Transverse colon (tissue), 4 donors: ENCODE measurements at regions of chr2 and their contacts with region 1.

Region 1: GRCh38 chr2:70301344-70302194 is at the start of gene FAM136A:
- DNase-seq: peak; percentile 91
- H3K4me3 ChIP-seq: peak within 1 kb of the TSS; percentile 60 to 94 (median 82)
- H3K27ac ChIP-seq: peak within 1 kb of the TSS; percentile 86 to 93 (median 90)
- H3K4me1 ChIP-seq: peaks cover 4 to 13% (median 8%) of the 10 kb centered on the region in 4 donors
- H3K27me3 ChIP-seq: no peaks in the 10 kb centered on the region
- CTCF ChIP-seq: peak; percentile 83 to 99 (median 97)
- EP300 ChIP-seq: no peak
- POLR2A ChIP-seq: peak; percentile 55
- total RNA-seq, gene FAM136A: 10.7 to 45.1 (median 31.0) TPM

Region 2: GRCh38 chr2:69914170-69914960 is 387.2 kb before region 1 on chr2:
- in situ Hi-C with region 1: loop called in 2 of 4 experiments (anchors 10 kb)
- intact Hi-C with region 1: loop called (anchors 5 kb)
- DNase-seq: peak; percentile 100
- H3K4me3 ChIP-seq: peak overlapping the region; percentile 38 to 92 (median 82)
- H3K27ac ChIP-seq: peak overlapping the region; percentile 94 to 99 (median 98)
- H3K4me1 ChIP-seq: peaks cover 13 to 49% (median 21%) of the 10 kb centered on the region in 4 donors
- H3K27me3 ChIP-seq: no peaks in the 10 kb centered on the region
- CTCF ChIP-seq: peak in 3 of 5 experiments; percentile 15 to 46 (median 17)
- EP300 ChIP-seq: no peak
- POLR2A ChIP-seq: peak; percentile 71

Region 3: GRCh38 chr2:70948337-70949003 is 646.9 kb after region 1 on chr2:
- in situ Hi-C with region 1: loop called in 3 of 4 experiments (anchors 25 kb)
- intact Hi-C with region 1: no loop called
- DNase-seq: peak; percentile 80
- H3K4me3 ChIP-seq: peak overlapping the region in 2 of 4 donors; percentile 16 to 41
- H3K27ac ChIP-seq: no peak overlapping the region
- H3K4me1 ChIP-seq: peaks cover 0 to 7% (median 2%) of the 10 kb centered on the region in 4 donors
- H3K27me3 ChIP-seq: peaks cover 42% of the 10 kb centered on the region
- CTCF ChIP-seq: peak; percentile 70 to 86 (median 80)
- EP300 ChIP-seq: no peak
- POLR2A ChIP-seq: no peak